Naive thymus-derived CD4-positive, alpha-beta T cell (primary cell): ENCODE measurements at regions of chr3 and their contacts with region 1.

Region 1: DNA sequence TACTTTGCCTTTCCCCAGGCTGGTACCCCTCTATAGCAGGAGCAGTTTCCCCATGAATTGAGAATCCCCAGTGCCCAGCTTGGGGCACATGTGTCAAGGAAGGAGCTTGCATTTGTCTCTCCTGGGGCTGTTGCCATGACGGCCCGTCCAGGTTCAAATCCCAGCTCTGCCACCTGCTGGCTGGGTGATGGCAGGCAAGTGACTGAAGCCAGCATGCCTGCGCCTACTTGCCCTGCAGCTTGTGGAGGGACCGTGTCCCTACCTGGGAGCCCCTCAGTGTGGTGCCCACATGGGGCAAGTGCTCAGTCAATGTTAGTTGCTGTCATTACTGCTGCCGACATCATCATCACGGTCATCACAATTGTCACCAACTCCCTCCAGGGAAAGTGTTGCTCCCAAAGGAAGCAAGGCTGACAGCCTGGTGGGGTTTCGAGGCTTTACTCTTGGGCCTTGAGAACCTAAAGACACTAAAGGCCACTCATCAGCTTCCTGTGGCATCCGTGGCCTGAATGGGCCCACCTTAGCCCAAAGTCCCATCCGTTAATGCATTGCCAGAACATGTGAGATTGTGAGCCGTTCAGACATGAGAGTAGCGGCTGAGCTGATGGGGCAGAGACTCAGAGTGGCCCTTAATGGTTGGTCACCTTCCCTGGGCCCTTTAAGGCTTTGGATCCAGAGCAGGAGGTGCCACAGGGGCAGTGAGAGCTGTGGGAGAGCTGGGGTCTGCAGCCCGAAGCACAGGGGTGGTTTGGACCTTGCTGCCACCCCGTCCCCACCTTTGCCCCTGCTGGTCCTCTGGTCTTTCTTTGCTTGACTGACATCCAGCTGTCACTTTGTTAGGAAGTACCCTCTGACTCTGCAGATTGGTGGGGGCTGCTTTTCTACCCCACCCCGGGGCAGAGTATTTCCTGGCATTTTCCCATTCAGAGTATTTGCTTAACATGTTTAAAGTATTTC is 144.3 kb downstream of the DNAJB8 start:
- DNase-seq: peak; percentile 32 to 74 (median 68)
- ATAC-seq: peak; percentile 67
- H3K4me3 ChIP-seq: no peak overlapping the region
- H3K4me3 Mint-ChIP-seq: peak overlapping the region in 3 of 10 donors; percentile 11 to 33 (median 25)
- H3K27ac ChIP-seq: peak overlapping the region; percentile 78
- H3K27ac Mint-ChIP-seq: peak overlapping the region in 8 of 9 donors; percentile 70 to 91 (median 84)
- H3K4me1 ChIP-seq: peaks cover 3 to 54% of the 10 kb centered on the region in 2 donors
- H3K4me1 Mint-ChIP-seq: peaks cover 18 to 84% (median 75%) of the 10 kb centered on the region in 7 donors
- H3K27me3 ChIP-seq: no peaks in the 10 kb centered on the region
- H3K27me3 Mint-ChIP-seq: no peaks in the 10 kb centered on the region

Region 2: GRCh38 chr3:128021759-128022372 is 300.5 kb before region 1 on chr3:
- CTCF ChIA-PET with region 1: no interaction called
- POLR2A ChIA-PET with region 1: no interaction called
- intact Hi-C with region 1: no loop called
- DNase-seq: no peak
- ATAC-seq: no peak
- H3K4me3 ChIP-seq: no peak overlapping the region
- H3K4me3 Mint-ChIP-seq: no peak overlapping the region
- H3K27ac ChIP-seq: no peak overlapping the region
- H3K27ac Mint-ChIP-seq: no peak overlapping the region
- H3K4me1 ChIP-seq: no peaks in the 10 kb centered on the region
- H3K4me1 Mint-ChIP-seq: no peaks in the 10 kb centered on the region
- H3K27me3 ChIP-seq: no peaks in the 10 kb centered on the region
- H3K27me3 Mint-ChIP-seq: peaks cover 0 to 12% (median 10%) of the 10 kb centered on the region in 5 donors

Region 3: GRCh38 chr3:128075516-128076482 is 246.5 kb before region 1 on chr3:
- CTCF ChIA-PET with region 1: no interaction called
- POLR2A ChIA-PET with region 1: no interaction called
- intact Hi-C with region 1: loop called in 1 of 2 experiments (anchors 1 kb)
- DNase-seq: peak; percentile 73 to 93 (median 84)
- ATAC-seq: peak; percentile 95
- H3K4me3 ChIP-seq: peak overlapping the region; percentile 53
- H3K4me3 Mint-ChIP-seq: peak overlapping the region; percentile 55 to 82 (median 73)
- H3K27ac ChIP-seq: peak overlapping the region; percentile 42
- H3K27ac Mint-ChIP-seq: peak overlapping the region in 6 of 9 donors; percentile 51 to 84 (median 62)
- H3K4me1 ChIP-seq: peaks cover 0 to 9% of the 10 kb centered on the region in 2 donors
- H3K4me1 Mint-ChIP-seq: peaks cover 0 to 12% (median 7%) of the 10 kb centered on the region in 7 donors
- H3K27me3 ChIP-seq: no peaks in the 10 kb centered on the region
- H3K27me3 Mint-ChIP-seq: peaks cover 0 to 2% (median 0%) of the 10 kb centered on the region in 5 donors

Region 4: GRCh38 chr3:128123538-128124368 is 198.6 kb before region 1 on chr3 and contains the start of gene RUVBL1:
- CTCF ChIA-PET with region 1: no interaction called
- POLR2A ChIA-PET with region 1: interaction called, 8 read pairs
- intact Hi-C with region 1: loop called in 1 of 2 experiments (anchors 1 kb)
- DNase-seq: peak; percentile 85 to 99 (median 98)
- ATAC-seq: peak; percentile 97
- H3K4me3 ChIP-seq: peak within 1 kb of the TSS; percentile 83
- H3K4me3 Mint-ChIP-seq: peak within 1 kb of the TSS; percentile 82 to 100 (median 98)
- H3K27ac ChIP-seq: peak within 1 kb of the TSS; percentile 84
- H3K27ac Mint-ChIP-seq: peak within 1 kb of the TSS; percentile 95 to 99 (median 97)
- H3K4me1 ChIP-seq: peaks cover 13 to 15% of the 10 kb centered on the region in 2 donors
- H3K4me1 Mint-ChIP-seq: peaks cover 23 to 40% (median 27%) of the 10 kb centered on the region in 7 donors
- H3K27me3 ChIP-seq: no peaks in the 10 kb centered on the region
- H3K27me3 Mint-ChIP-seq: peaks cover 0 to under 1% (median 0%) of the 10 kb centered on the region in 5 donors
- total RNA-seq, gene RUVBL1: 16.8 to 59.3 (median 22.5) TPM

Region 5: GRCh38 chr3:128170805-128171516 is 151.4 kb before region 1 on chr3:
- CTCF ChIA-PET with region 1: interaction called, 11 read pairs
- POLR2A ChIA-PET with region 1: no interaction called
- intact Hi-C with region 1: loop called in 1 of 2 experiments (anchors 1 kb)
- DNase-seq: peak in 3 of 9 donors; percentile 10 to 16 (median 11)
- ATAC-seq: peak; percentile 57
- H3K4me3 ChIP-seq: no peak overlapping the region
- H3K4me3 Mint-ChIP-seq: no peak overlapping the region
- H3K27ac ChIP-seq: no peak overlapping the region
- H3K27ac Mint-ChIP-seq: peak overlapping the region in 2 of 9 donors; percentile 58 to 86
- H3K4me1 ChIP-seq: peaks cover 0 to 13% of the 10 kb centered on the region in 2 donors
- H3K4me1 Mint-ChIP-seq: peaks cover 4 to 69% (median 50%) of the 10 kb centered on the region in 7 donors
- H3K27me3 ChIP-seq: no peaks in the 10 kb centered on the region
- H3K27me3 Mint-ChIP-seq: no peaks in the 10 kb centered on the region

Region 6: GRCh38 chr3:128278761-128279600 is 43.4 kb before region 1 on chr3:
- CTCF ChIA-PET with region 1: interaction called, 4 read pairs
- POLR2A ChIA-PET with region 1: no interaction called
- intact Hi-C with region 1: loop called in 1 of 2 experiments (anchors 5 kb)
- DNase-seq: no peak
- ATAC-seq: no peak
- H3K4me3 ChIP-seq: no peak overlapping the region
- H3K4me3 Mint-ChIP-seq: no peak overlapping the region
- H3K27ac ChIP-seq: no peak overlapping the region
- H3K27ac Mint-ChIP-seq: peak overlapping the region in 4 of 9 donors; percentile 5 to 42 (median 22)
- H3K4me1 ChIP-seq: no peaks in the 10 kb centered on the region
- H3K4me1 Mint-ChIP-seq: peaks cover 0 to 38% (median 31%) of the 10 kb centered on the region in 7 donors
- H3K27me3 ChIP-seq: no peaks in the 10 kb centered on the region
- H3K27me3 Mint-ChIP-seq: no peaks in the 10 kb centered on the region

Region 7: DNA sequence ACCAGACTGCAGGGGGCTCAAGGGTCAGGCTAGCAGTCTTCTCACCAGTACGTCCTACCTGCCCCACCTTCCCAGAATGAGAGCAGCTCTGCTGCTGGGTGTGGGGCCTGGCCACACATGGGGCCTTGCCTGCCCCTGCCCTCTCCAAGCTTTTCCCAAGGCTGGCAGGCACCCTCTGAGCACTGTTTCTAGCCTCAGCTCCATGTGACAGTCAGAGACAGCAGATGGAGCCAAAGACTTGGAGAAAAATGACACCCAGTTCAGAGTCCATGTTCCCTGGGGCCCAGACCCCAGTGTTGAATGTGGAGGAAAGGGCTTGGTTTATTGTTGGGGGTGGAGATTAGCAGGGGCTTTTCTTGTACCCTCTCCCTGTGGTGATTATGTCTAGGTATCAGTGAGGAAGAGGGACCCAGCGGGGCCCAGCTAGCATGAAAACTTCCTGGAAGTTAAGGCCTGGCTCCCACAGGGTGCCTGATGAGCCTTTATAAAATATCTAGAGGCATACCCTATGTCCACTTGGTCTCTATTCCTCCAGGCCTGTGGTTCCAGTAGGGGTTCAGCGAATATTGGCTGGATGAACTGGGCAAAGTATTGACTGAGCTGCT is 15.2 kb before region 1 on chr3:
- CTCF ChIA-PET with region 1: interaction called, 91 read pairs
- POLR2A ChIA-PET with region 1: interaction called, 15 read pairs
- intact Hi-C with region 1: loop called in 1 of 2 experiments (anchors 1 kb)
- DNase-seq: peak in 4 of 9 donors; percentile 9 to 35 (median 31)
- ATAC-seq: peak; percentile 50
- H3K4me3 ChIP-seq: no peak overlapping the region
- H3K4me3 Mint-ChIP-seq: peak overlapping the region in 1 of 10 donors; percentile 34
- H3K27ac ChIP-seq: no peak overlapping the region
- H3K27ac Mint-ChIP-seq: peak overlapping the region in 5 of 9 donors; percentile 15 to 68 (median 21)
- H3K4me1 ChIP-seq: peaks cover 0 to 6% of the 10 kb centered on the region in 2 donors
- H3K4me1 Mint-ChIP-seq: peaks cover 0 to 51% (median 35%) of the 10 kb centered on the region in 7 donors
- H3K27me3 ChIP-seq: no peaks in the 10 kb centered on the region
- H3K27me3 Mint-ChIP-seq: no peaks in the 10 kb centered on the region